Activated CD4-positive, alpha-beta T cell treated with anti-CD3 and anti-CD28 coated beads for 36 hours (primary cell): ENCODE measurements at regions of chr10 and their contacts with region 1.

Region 1: GRCh38 chr10:69123747-69124562 is at the start of gene VPS26A:
- DNase-seq: peak; percentile 100
- ATAC-seq: peak; percentile 95
- H3K4me3 Mint-ChIP-seq: peak within 1 kb of the TSS; percentile 90
- H3K27ac Mint-ChIP-seq: peak within 1 kb of the TSS; percentile 91
- H3K4me1 Mint-ChIP-seq: peaks cover 31% of the 10 kb centered on the region
- H3K27me3 Mint-ChIP-seq: no peaks in the 10 kb centered on the region
- total RNA-seq, gene VPS26A: 27.1 to 32.2 TPM

Region 2: DNA sequence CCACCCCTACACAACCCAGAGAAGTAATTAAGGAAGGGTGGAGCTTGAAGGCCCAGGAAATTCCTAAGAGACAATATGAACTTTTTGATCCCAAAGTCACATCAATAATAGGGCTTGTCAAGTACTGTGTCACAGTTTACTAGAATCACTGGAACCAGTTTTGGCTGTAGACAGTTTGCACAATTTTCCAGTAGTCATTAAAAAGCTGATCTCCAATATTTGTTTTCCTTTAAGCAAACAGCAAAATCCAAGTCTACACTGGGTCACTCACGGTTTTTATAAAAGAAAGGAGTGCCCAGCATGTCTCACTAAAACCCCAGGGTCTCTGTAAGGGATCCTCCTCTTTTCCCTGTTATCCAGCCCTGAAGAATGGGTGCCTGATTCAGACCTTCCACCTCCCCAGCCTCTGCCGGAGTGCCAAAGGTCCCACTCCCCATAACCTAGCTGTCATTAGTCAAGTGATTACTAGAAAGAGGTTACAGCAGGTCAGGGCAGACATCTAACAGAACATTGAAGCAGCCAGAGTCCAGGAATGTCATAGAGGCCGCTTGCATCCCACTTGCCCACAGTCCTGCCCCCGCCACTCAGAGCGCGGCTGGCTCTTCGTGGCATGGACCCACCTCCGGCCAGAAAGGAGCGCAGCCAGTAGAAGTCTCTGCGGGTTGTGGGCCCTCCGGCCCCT is 597.2 kb before region 1 on chr10:
- CTCF ChIA-PET with region 1: no interaction called
- POLR2A ChIA-PET with region 1: no interaction called
- intact Hi-C with region 1: loop called in 1 of 2 experiments (anchors 1 kb)
- DNase-seq: no peak
- ATAC-seq: peak; percentile 16
- H3K4me3 Mint-ChIP-seq: peak overlapping the region; percentile 93
- H3K27ac Mint-ChIP-seq: peak overlapping the region; percentile 88
- H3K4me1 Mint-ChIP-seq: peaks cover 9% of the 10 kb centered on the region
- H3K27me3 Mint-ChIP-seq: no peaks in the 10 kb centered on the region

Region 3: GRCh38 chr10:68861253-68861652 is 262.7 kb before region 1 on chr10:
- CTCF ChIA-PET with region 1: no interaction called
- POLR2A ChIA-PET with region 1: no interaction called
- intact Hi-C with region 1: no loop called
- DNase-seq: no peak
- ATAC-seq: no peak
- H3K4me3 Mint-ChIP-seq: no peak overlapping the region
- H3K27ac Mint-ChIP-seq: no peak overlapping the region
- H3K4me1 Mint-ChIP-seq: no peaks in the 10 kb centered on the region
- H3K27me3 Mint-ChIP-seq: no peaks in the 10 kb centered on the region

Region 4: GRCh38 chr10:68988530-68989316 is 135.2 kb before region 1 on chr10 and contains the start of gene KIFBP:
- CTCF ChIA-PET with region 1: interaction called, 7 read pairs
- POLR2A ChIA-PET with region 1: interaction called, 3 read pairs
- intact Hi-C with region 1: loop called (anchors 1 kb)
- DNase-seq: peak; percentile 91
- ATAC-seq: peak; percentile 89
- H3K4me3 Mint-ChIP-seq: peak within 1 kb of the TSS; percentile 86
- H3K27ac Mint-ChIP-seq: peak within 1 kb of the TSS; percentile 86
- H3K4me1 Mint-ChIP-seq: peaks cover 51% of the 10 kb centered on the region
- H3K27me3 Mint-ChIP-seq: no peaks in the 10 kb centered on the region
- total RNA-seq, gene KIFBP: 12.9 to 15.6 TPM

Region 5: GRCh38 chr10:69087590-69088470 is 36.1 kb before region 1 on chr10 and contains the start of gene SRGN:
- CTCF ChIA-PET with region 1: interaction called, 4 read pairs
- POLR2A ChIA-PET with region 1: no interaction called
- intact Hi-C with region 1: loop called (anchors 1 kb)
- DNase-seq: peak; percentile 87
- ATAC-seq: peak; percentile 57
- H3K4me3 Mint-ChIP-seq: peak within 1 kb of the TSS; percentile 86
- H3K27ac Mint-ChIP-seq: peak within 1 kb of the TSS; percentile 99
- H3K4me1 Mint-ChIP-seq: peaks cover 55% of the 10 kb centered on the region
- H3K27me3 Mint-ChIP-seq: no peaks in the 10 kb centered on the region
- total RNA-seq, gene SRGN: 375 to 400 TPM

Region 6: DNA sequence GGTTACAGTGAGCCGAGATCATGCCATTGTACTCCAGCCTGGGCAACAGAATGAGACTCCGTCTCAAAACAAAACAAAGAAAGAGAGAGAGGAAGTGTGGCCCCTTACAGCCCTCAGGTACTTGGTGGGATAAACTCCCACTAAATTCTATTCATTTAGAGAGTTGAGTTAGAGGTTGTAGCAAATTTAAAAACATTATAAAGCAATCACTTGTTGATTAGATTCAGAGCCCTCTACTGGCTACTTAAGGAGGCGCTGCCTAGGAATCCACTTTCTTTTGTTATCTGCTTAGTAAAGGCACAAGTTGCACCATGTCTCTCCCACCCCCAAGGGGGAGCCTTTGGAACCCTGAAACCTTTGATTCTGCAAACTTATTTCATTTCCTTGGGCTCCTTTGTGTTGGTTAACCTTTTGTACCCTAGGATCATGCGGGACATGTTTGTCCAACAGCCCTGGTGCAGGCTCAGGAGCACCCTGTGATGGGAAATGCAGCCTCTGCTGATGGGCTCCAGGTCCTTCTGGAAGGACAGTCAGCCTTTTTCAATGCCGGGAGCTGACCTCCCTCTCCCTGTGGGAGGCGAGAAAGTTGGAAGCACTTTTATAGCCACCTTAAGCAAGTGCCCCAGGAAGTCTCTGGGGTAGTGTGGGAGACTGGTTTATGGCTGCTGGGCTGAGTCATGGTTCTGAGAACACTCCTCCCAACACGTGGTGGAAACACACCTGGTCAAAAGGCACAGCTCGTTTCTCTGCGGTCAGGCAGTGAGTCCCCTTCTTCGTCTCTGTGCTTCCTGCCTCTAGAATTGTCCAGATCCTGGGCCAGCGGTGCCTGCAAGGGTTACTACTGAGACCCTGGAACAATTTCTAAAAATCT is 98.4 kb after region 1 on chr10:
- CTCF ChIA-PET with region 1: interaction called, 3 read pairs
- POLR2A ChIA-PET with region 1: interaction called, 3 read pairs
- intact Hi-C with region 1: loop called in 1 of 2 experiments (anchors 1 kb)
- DNase-seq: peak; percentile 90
- ATAC-seq: peak; percentile 92
- H3K4me3 Mint-ChIP-seq: peak overlapping the region; percentile 52
- H3K27ac Mint-ChIP-seq: peak overlapping the region; percentile 91
- H3K4me1 Mint-ChIP-seq: peaks cover 32% of the 10 kb centered on the region
- H3K27me3 Mint-ChIP-seq: no peaks in the 10 kb centered on the region

Region 7: GRCh38 chr10:70169649-70170364 is 1045.9 kb after region 1 on chr10:
- CTCF ChIA-PET with region 1: no interaction called
- POLR2A ChIA-PET with region 1: no interaction called
- intact Hi-C with region 1: loop called in 1 of 2 experiments (anchors 5 kb)
- DNase-seq: no peak
- ATAC-seq: peak; percentile 5
- H3K4me3 Mint-ChIP-seq: peak overlapping the region; percentile 94
- H3K27ac Mint-ChIP-seq: peak overlapping the region; percentile 84
- H3K4me1 Mint-ChIP-seq: peaks cover 64% of the 10 kb centered on the region
- H3K27me3 Mint-ChIP-seq: no peaks in the 10 kb centered on the region